Dendritic cell treated with granulocyte-macrophage colony-stimulating factor and Interleukin-4, amounts not matched to agents 40 ng/mL and 50 ng/mL, for 4 days (primary cell): ENCODE measurements at regions of chrX and their contacts with region 1.

Region 1: DNA sequence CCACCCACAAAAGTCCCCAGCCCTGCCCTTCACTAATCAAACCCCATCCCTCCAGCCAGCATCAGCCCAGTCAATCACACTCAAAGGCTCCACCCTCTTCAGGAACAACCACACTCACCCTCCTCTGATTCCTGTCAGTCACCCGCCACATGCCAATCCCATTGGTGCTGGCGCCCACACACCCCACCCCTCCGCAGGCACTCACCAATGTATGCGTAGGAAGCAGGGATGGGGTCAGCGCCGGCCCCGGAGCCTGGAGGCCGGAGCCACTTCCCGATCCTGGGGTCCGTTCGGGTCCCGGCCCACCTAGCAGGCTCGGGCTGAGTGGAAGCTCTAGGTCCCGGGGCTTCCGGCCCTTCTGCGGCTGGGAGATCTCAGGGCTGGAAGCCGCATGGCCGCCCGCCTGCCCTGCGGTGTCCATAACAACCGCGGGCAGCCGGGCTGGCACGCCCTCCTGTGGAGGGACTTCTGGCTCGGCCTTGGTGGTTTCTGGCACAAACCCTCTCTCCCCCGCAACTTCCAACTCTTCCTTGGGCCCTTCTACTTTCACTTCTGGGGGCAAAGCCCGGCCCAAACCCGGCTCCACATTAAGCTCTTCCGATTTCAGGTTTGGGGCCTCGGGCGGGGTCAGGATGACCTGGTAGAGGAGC is 7.9 kb upstream of the CFP start:
- H3K4me3 Mint-ChIP-seq: peak overlapping the region; percentile 77
- H3K27ac Mint-ChIP-seq: peak overlapping the region; percentile 61
- H3K4me1 Mint-ChIP-seq: peaks cover 19% of the 10 kb centered on the region
- H3K27me3 Mint-ChIP-seq: no peaks in the 10 kb centered on the region

Region 2: GRCh38 chrX:47560831-47561652 is 76.6 kb before region 1 on chrX and contains the start of gene ARAF:
- intact Hi-C with region 1: loop called (anchors 5 kb)
- H3K4me3 Mint-ChIP-seq: peak within 1 kb of the TSS; percentile 89
- H3K27ac Mint-ChIP-seq: peak within 1 kb of the TSS; percentile 96
- H3K4me1 Mint-ChIP-seq: peaks cover 44% of the 10 kb centered on the region
- H3K27me3 Mint-ChIP-seq: no peaks in the 10 kb centered on the region

Region 3: GRCh38 chrX:47595716-47596251 is 41.9 kb before region 1 on chrX:
- intact Hi-C with region 1: no loop called
- H3K4me3 Mint-ChIP-seq: no peak overlapping the region
- H3K27ac Mint-ChIP-seq: no peak overlapping the region
- H3K4me1 Mint-ChIP-seq: peaks cover 5% of the 10 kb centered on the region
- H3K27me3 Mint-ChIP-seq: peaks cover 3% of the 10 kb centered on the region